Activated B cell treated with CpG ODN at 0.5 μM for 24 hours (primary cell): ENCODE measurements at regions of chr1 and their contacts with region 1.

Region 1: DNA sequence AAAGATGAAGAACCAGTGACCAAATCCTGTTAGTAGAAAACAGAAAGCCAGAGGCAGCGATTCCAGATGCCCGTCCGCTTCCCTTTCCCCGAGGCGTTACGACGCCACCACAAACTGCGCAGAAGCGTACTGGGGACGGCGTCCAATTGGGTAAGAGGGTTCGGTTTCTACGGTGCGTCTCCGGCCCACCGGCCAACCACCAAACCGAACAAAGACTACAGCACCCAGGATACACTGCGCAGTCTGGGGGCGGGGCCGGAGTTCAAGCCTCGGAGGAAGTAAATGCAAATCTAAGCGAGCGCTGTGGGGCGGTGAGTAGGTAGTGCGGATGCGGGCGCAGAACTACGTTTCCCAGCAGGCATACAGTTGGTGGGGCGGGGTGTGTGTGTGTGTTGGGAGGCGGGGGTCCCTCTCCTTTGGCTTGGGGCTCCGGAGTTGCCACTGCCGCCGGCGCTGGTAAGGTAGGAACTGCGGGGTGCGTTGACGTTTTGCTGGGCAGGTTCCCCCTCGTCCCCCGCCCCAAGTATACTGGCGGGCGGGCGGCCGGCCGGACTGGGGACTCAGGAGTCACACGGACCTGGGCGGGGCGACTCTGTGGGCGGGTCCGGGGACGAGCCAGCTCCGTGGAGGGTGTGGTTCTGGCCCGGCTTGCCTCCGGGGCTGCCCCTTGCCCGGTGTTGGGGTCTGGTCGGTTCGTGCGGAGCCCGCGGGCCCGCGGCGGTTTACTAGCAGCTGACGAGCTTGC is at the starts of genes SWT1 and TRMT1L:
- DNase-seq: peak; percentile 97
- ATAC-seq: peak; percentile 85
- H3K4me3 Mint-ChIP-seq: peak within 1 kb of the TSS; percentile 99
- H3K27ac Mint-ChIP-seq: peak within 1 kb of the TSS; percentile 100
- H3K4me1 Mint-ChIP-seq: peaks cover 50% of the 10 kb centered on the region
- H3K27me3 Mint-ChIP-seq: no peaks in the 10 kb centered on the region
- CTCF ChIP-seq: no peak
- total RNA-seq, gene SWT1: 4.9 and 5.5 TPM in 2 replicates
- total RNA-seq, gene TRMT1L: 20.0 and 23.9 TPM in 2 replicates

Region 2: GRCh38 chr1:184152434-184152898 is 1004.6 kb before region 1 on chr1:
- CTCF ChIA-PET with region 1: no interaction called
- POLR2A ChIA-PET with region 1: no interaction called
- intact Hi-C with region 1: no loop called
- DNase-seq: no peak
- ATAC-seq: no peak
- H3K4me3 Mint-ChIP-seq: peak overlapping the region; percentile 15
- H3K27ac Mint-ChIP-seq: no peak overlapping the region
- H3K4me1 Mint-ChIP-seq: peaks cover 10% of the 10 kb centered on the region
- H3K27me3 Mint-ChIP-seq: peaks cover 23% of the 10 kb centered on the region
- CTCF ChIP-seq: no peak

Region 3: GRCh38 chr1:184754476-184755225 is 402.4 kb before region 1 on chr1 and contains the start of gene EDEM3:
- CTCF ChIA-PET with region 1: no interaction called
- POLR2A ChIA-PET with region 1: interaction called, 8 read pairs
- intact Hi-C with region 1: loop called (anchors 1 kb)
- DNase-seq: peak; percentile 90
- ATAC-seq: peak; percentile 95
- H3K4me3 Mint-ChIP-seq: peak within 1 kb of the TSS; percentile 95
- H3K27ac Mint-ChIP-seq: peak within 1 kb of the TSS; percentile 86
- H3K4me1 Mint-ChIP-seq: peaks cover 23% of the 10 kb centered on the region
- H3K27me3 Mint-ChIP-seq: peaks cover under 1% of the 10 kb centered on the region
- CTCF ChIP-seq: no peak
- total RNA-seq, gene EDEM3: 11.5 and 16.2 TPM in 2 replicates

Region 4: DNA sequence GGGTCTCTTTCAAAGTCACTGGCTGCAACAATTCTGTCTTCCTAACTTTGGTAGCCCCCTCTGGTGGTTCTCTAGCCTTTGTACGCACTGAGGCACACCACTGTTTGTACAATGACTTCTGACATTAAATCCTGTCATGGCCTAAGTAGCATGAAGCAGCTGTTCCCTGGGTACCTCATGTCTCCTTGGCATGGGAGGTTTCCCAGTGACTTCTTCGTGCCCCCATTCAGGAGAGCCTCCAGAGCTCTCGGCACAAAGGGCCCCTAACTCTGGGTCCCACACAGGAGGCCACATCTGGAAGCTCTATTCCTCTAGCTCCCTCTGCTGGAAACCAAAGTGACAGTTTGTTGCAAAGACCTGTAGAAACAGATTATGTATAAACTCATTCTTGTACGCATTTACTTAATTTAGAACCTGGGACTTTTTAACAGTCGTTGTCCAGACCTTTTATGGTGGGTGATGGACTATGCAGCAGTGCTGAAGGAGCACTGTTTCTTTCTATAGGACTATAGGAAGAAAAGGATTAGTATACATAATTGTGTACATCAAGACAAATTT is 13.3 kb after region 1 on chr1:
- CTCF ChIA-PET with region 1: interaction called, 42 read pairs
- POLR2A ChIA-PET with region 1: interaction called, 12 read pairs
- intact Hi-C with region 1: loop called (anchors 1 kb)
- DNase-seq: peak; percentile 30
- ATAC-seq: peak; percentile 83
- H3K4me3 Mint-ChIP-seq: peak overlapping the region; percentile 19
- H3K27ac Mint-ChIP-seq: no peak overlapping the region
- H3K4me1 Mint-ChIP-seq: peaks cover 8% of the 10 kb centered on the region
- H3K27me3 Mint-ChIP-seq: no peaks in the 10 kb centered on the region
- CTCF ChIP-seq: peak; percentile 82

Region 5: DNA sequence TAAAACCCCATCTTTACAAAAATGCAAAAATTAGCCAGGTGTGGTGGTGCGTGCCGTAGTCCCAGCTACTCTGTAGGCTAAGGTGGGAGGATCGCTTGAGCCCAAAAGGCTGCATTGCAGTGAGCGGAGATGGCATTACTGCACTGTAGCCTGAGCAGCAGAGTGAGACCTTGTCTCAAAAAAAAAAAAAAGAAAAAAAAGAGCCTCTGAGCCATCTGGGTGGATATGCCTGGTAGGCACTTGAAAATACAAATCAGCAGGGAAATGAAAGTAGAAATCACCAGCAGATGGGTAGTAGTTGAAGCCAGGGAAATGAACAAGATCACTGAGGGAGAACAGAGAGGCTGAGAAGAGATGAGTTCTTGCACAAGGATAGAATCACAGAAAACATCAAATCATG is 446.1 kb after region 1 on chr1:
- CTCF ChIA-PET with region 1: no interaction called
- POLR2A ChIA-PET with region 1: interaction called, 4 read pairs
- intact Hi-C with region 1: loop called (anchors 1 kb)
- DNase-seq: peak; percentile 26
- ATAC-seq: peak; percentile 92
- H3K4me3 Mint-ChIP-seq: no peak overlapping the region
- H3K27ac Mint-ChIP-seq: no peak overlapping the region
- H3K4me1 Mint-ChIP-seq: peaks cover 42% of the 10 kb centered on the region
- H3K27me3 Mint-ChIP-seq: no peaks in the 10 kb centered on the region
- CTCF ChIP-seq: no peak

Region 6: GRCh38 chr1:186375088-186375953 is 1218.3 kb after region 1 on chr1 and contains the starts of genes ODR4 and TPR:
- CTCF ChIA-PET with region 1: no interaction called
- POLR2A ChIA-PET with region 1: interaction called, 14 read pairs
- intact Hi-C with region 1: loop called (anchors 1 kb)
- DNase-seq: peak; percentile 93
- ATAC-seq: peak; percentile 82
- H3K4me3 Mint-ChIP-seq: peak within 1 kb of the TSS; percentile 92
- H3K27ac Mint-ChIP-seq: peak within 1 kb of the TSS; percentile 92
- H3K4me1 Mint-ChIP-seq: peaks cover 31% of the 10 kb centered on the region
- H3K27me3 Mint-ChIP-seq: no peaks in the 10 kb centered on the region
- CTCF ChIP-seq: peak; percentile 53
- total RNA-seq, gene ODR4: 11.9 and 15.6 TPM in 2 replicates
- total RNA-seq, gene TPR: 112 and 125 TPM in 2 replicates